ENCODE measurements at regions of chr1 and their contacts with region 1.

Region 1: DNA sequence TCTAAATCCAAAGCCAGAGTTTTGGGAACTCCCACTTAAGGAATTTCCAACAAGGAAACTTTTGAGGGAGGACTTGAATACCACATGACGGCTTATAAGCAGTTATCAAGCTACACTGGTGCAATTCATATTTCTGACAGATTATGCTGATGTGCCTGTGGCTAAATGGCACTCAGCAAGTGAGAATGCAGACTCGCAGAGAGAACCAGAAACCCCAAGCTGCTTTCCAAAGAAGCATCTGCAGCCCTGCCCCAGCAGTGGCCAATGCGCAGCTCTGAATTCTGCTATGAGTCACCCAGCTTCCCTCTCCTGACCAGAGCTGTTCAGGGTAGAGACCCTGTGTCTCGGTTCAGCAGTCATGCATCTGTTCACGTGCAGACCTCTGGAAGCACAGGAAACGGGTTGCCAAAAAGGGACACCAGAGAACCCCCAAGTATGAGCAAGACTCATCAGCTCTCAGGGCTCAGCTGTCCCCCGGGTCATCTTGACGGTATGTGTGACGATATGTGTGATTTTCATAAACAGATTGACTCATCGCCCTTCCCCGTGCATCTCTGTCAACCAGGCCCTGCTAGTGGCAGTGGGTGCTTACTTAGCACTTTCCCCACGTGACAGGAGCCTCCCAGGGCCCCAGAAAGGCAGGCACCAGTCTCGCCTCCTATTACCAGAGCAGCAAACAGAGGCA is 76.3 kb downstream of the ITPKB start:
- DNase-seq: peak; percentile 93

Region 2: DNA sequence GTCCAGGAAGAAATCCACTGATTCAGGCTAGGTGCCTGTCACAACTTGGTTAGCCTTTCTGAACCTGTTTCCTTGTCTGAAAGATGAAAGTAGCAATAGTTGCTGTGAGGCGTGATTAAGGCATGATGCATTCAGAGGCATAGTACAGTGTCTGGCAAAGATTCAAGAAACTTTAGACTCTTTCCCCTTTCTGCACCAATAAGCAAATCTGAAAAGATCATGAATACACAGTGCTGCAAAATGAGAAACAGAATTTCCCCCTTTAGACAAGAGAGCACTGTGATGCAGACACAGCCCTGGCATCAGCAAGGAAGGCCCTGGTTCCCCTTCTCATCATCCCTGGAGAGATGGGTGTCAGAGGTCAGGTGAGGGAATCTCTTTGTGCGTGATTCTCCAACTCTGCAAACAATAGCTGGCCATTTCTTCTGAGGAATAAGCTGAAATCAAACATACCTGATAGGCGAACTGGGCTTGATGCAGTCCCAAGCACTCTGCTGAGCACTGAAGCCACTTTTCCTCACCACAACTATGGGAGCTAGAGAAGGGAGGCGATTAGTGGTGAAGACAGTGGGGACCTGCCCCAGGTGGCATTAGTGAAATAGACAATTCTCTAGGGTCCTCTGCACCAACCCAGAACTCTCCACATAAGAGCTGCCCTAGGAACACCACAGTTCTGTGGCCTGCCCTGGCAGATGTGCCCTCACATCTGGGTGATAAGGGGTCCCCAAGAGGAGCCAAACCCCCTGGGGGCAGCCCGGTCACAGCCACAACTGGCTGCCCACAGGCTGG is 34.6 kb after region 1 on chr1:
- intact Hi-C with region 1: loop called in 1 of 2 experiments (anchors 5 kb)
- DNase-seq: peak; percentile 44

Region 3: DNA sequence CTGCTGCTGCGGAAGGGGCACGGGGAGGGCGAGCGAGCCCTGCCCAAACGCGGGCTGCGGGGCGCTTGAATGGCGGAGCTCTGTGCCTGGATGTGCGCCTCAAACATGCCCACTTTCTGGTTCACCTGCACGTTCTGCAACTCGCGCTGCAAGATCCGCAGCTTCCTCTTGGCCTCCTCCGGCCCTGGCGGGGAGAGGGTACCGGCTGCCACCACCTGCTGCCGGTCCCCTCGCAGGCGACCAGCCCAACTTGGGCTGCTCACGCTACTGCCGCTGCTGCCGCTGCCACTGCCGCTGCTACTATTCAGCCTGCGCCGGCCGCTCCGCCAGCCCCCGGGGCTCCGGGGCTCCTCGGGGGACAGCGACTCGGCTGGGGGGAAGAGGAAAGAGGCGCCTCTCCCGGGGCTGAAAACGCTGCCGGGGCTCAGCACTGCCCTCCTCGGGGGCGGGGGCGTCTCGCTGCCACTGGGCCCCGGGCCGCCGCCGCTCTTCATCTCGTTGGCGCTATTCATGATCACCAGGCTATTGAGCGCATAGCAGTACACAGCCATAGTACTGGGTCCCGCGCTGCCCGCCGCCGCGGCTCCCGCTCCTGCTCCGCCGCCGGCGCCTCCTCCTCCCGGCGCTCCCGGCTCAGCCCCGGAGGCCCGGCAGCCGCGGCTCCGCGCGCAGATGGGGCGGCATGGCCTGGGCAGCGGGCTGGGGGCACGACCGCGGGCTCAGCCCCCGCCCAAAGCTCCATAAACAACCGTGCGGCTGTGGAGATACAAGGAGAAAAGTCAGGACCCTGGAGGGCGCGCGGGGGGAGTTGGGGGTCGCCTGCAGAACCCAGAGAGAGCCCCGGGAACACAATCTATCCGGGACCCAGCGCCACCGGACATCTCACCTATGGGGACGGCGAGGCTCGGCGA is 74.4 kb after region 1 on chr1:
- intact Hi-C with region 1: loop called in 1 of 2 experiments (anchors 5 kb)
- DNase-seq: peak; percentile 86

Measured in posterior vena cava (tissue), 2 donors.